ENCODE measurements at regions of chr1 and their contacts with region 1.

Region 1: DNA sequence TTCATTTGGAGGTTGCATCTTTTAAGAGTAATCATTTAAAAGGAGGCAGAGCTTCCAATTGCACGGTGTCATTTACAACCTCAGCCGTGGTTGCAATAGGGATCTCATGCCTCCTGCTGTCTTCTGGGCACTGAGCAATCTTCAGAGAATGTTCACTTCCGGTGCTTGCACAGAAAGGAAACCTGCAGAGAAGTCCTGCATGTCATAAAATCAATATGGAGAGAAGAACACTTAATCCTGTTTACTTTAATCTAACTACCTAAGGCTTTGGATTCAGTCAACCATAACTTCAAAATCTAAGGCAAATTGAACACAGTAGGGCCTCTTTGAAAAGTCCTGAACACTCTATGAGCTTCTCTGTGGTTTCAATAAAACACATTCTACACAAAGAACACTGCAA is 11.3 kb upstream of the MAP10 start:
- DNase-seq: peak; percentile 17 to 23
- ATAC-seq: peak; percentile 91 to 95
- H3K4me3 ChIP-seq: no peak overlapping the region
- H3K27ac ChIP-seq: peak overlapping the region; percentile 43 to 65 (median 56)
- H3K4me1 ChIP-seq: peaks cover 12 to 30% of the 10 kb centered on the region in 2 donors
- H3K27me3 ChIP-seq: no peaks in the 10 kb centered on the region
- CTCF ChIP-seq: peak in 1 of 5 experiments; percentile 12
- POLR2A ChIP-seq: no peak

Region 2: GRCh38 chr1:232635778-232636356 is 158.1 kb before region 1 on chr1:
- in situ Hi-C with region 1: loop called in 1 of 4 experiments (anchors 5 kb)
- intact Hi-C with region 1: no loop called
- DNase-seq: no peak
- ATAC-seq: peak; percentile 71 to 76
- H3K4me3 ChIP-seq: no peak overlapping the region
- H3K27ac ChIP-seq: no peak overlapping the region
- H3K4me1 ChIP-seq: peaks cover 0 to 3% of the 10 kb centered on the region in 2 donors
- H3K27me3 ChIP-seq: no peaks in the 10 kb centered on the region
- CTCF ChIP-seq: peak; percentile 47 to 85 (median 79)
- POLR2A ChIP-seq: no peak

Region 3: GRCh38 chr1:232776526-232777106 is 17.3 kb before region 1 on chr1:
- in situ Hi-C with region 1: no loop called
- intact Hi-C with region 1: no loop called
- DNase-seq: no peak
- ATAC-seq: no peak
- H3K4me3 ChIP-seq: no peak overlapping the region
- H3K27ac ChIP-seq: no peak overlapping the region
- H3K4me1 ChIP-seq: no peaks in the 10 kb centered on the region
- H3K27me3 ChIP-seq: no peaks in the 10 kb centered on the region
- CTCF ChIP-seq: no peak
- POLR2A ChIP-seq: no peak

Measured in gastrocnemius medialis (tissue), 4 donors.